GM18951 (cell line): ENCODE measurements at regions of chr13 and their contacts with region 1.

Region 1: DNA sequence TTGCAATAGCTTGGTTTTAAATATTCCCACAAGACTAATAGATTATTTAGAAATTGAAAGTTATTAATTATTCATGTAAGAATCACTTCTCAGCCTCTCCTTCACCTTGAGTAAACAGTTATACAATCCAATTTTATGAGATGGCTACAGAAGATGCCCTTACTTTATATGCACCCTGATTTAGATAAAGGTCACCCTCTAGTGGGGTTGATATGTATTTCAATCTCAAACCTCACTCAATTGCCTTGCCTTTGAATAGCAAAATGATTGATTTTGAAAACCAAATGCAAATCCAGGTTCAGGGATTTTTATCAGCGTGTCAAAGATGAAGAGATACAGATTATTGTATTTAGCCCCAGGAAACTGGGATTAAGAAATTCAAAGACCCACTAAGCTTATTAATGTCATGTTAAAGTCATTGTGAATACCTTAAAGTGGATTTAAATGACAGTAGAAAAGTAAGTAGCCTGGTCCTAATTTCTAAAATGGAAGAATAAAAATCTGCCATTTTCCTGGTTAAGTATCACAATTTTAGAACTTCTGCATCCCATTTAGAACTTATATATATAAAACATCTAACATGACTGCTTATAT is 305.1 kb downstream of the ITGBL1 start:
- POLR2A ChIP-seq: no peak

Region 2: GRCh38 chr13:101127741-101128353 is 629.7 kb before region 1 on chr13:
- in situ Hi-C with region 1: loop called (anchors 25 kb)
- POLR2A ChIP-seq: no peak

Region 3: DNA sequence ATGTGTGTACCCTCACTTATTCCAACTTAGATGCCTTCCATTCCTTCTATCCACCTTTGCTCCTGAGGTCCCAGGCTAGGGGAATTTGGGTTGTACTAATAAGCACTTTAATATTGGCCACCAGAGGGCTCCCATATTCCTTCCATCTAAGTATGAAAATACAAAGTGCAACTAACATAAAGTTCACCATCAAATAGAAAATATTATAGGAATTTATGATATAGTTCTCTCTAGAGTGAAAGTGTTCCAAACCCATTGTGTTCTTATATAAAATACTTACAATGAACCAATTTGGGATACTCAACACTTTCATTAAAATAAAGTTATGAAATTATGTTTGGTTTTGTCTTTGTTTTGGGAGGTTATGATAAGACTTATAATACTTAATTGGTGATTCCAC is 242.8 kb before region 1 on chr13:
- in situ Hi-C with region 1: loop called (anchors 10 kb)
- POLR2A ChIP-seq: no peak